Left ventricle myocardium superior (tissue), 1 donor: ENCODE measurements at regions of chr14 and their contacts with region 1.

Region 1: GRCh38 chr14:24817212-24818057 is 183.4 kb upstream of the GZMB start:
- DNase-seq: peak; percentile 46
- ATAC-seq: peak; percentile 63

Region 2: GRCh38 chr14:24630872-24631477 is 186.5 kb before region 1 on chr14:
- intact Hi-C with region 1: no loop called
- DNase-seq: no peak
- ATAC-seq: no peak

Region 3: DNA sequence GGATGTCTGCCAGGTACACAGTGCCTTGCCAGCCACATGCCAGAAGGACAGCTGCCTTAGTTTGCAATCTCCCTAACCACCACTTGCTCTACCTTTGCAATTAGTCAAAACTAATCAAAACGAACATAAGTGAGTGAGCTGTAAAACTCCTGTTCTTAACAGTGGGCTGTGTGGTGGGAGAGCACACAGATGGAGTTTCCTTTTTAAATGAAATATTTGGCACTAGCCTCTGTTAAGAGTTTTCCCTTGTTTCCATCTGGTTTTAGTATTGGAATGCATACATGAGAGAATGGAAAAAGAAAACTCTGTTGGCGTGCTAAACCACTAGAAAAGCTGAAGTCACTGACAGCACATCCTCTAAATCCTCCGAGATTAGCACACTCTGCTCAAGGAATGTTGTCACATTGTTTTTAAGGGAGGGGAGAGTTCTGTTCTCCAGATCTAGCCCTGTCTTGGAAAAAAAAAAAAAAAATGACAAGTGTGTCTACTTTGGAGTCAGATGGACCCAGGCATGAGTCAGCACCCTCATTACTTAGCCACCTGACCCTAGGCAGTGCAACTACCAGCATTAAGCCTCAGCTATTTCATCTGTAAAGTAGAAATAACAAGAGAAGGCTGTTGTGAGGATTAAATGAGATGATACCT is 148.6 kb after region 1 on chr14:
- intact Hi-C with region 1: loop called (anchors 10 kb)
- DNase-seq: peak; percentile 45
- ATAC-seq: peak; percentile 86

Region 4: DNA sequence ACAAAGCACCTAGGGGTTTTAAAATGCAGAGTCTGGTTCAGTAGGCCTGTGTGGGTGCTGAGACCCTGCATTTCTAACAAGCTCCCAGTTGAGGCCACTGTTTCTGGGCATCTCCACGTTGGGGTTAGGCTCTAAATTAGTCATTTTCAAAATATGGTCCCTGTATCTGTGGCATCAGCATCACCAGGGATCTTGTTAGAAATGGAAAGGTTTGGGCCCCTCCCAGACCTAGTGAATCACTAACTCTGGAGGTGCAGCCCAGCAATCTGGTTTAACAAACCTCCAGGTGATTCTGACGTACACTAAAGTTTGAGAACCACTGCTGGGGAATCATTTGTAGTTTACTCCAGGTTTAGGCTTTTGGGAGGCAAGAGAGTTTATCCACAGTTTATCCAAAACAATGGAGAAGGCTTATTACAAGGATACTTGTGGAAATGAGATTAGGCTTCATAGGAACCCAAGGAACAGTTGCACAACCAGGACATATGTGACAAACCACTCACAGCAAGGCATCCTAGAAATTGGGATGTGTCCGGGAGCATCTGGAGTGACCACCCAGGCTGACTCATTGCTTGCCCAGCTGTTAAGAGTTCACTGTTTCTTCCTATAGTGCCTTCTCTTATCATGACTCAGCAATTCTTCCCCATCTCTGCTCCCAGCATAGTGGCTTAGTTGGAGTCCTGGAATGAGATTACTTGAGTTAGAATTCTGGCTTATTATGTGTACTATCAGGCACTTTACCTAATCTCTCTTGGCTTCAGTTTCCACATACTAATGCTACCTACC is 304.1 kb after region 1 on chr14:
- intact Hi-C with region 1: loop called (anchors 10 kb)
- DNase-seq: peak; percentile 31
- ATAC-seq: peak; percentile 87